Activated naive CD4-positive, alpha-beta T cell treated with anti-CD3 and anti-CD28 coated beads for 36 hours (primary cell): ENCODE measurements at regions of chr12 and their contacts with region 1.

Region 1: GRCh38 chr12:127125607-127126259 is 1141.2 kb upstream of the TMEM132C start:
- DNase-seq: peak; percentile 75
- H3K4me3 Mint-ChIP-seq: no peak overlapping the region
- H3K27ac Mint-ChIP-seq: peak overlapping the region; percentile 36
- H3K4me1 Mint-ChIP-seq: peaks cover 13% of the 10 kb centered on the region
- H3K27me3 Mint-ChIP-seq: peaks cover 22% of the 10 kb centered on the region

Region 2: GRCh38 chr12:126627596-126627995 is 498.1 kb before region 1 on chr12:
- CTCF ChIA-PET with region 1: no interaction called
- intact Hi-C with region 1: no loop called
- DNase-seq: no peak
- H3K4me3 Mint-ChIP-seq: no peak overlapping the region
- H3K27ac Mint-ChIP-seq: no peak overlapping the region
- H3K4me1 Mint-ChIP-seq: no peaks in the 10 kb centered on the region
- H3K27me3 Mint-ChIP-seq: peaks cover 2% of the 10 kb centered on the region

Region 3: DNA sequence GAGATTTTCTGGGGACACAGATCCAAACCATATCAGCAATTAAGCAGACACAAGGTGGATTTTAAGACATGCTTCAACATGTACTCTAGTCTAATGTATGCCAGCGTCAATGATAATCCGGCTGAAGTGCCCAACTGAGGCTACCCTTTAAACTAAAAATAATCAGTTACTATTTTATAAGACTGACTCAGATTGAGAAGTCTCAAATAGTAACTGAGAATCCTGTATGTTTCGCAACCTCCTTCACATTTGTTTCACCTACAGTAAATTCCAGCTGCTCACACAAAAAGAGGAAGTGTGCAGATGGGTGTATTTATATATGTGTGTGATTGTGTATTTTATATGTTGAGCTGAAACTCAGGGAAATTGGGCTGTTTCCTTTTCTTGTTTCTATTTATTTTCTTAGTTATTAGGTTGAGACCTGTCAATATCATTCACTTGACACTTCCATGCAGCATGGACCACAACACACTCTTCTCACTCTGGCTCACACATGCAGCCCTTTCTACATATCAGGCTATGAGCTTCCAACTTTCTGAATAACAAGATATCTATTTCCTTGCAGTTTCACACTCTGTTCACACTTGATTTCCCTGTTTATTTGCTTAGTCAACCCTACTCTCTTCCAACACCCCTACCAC is 83.6 kb before region 1 on chr12:
- CTCF ChIA-PET with region 1: no interaction called
- intact Hi-C with region 1: no loop called
- DNase-seq: no peak
- H3K4me3 Mint-ChIP-seq: no peak overlapping the region
- H3K27ac Mint-ChIP-seq: no peak overlapping the region
- H3K4me1 Mint-ChIP-seq: no peaks in the 10 kb centered on the region
- H3K27me3 Mint-ChIP-seq: peaks cover 6% of the 10 kb centered on the region

Region 4: DNA sequence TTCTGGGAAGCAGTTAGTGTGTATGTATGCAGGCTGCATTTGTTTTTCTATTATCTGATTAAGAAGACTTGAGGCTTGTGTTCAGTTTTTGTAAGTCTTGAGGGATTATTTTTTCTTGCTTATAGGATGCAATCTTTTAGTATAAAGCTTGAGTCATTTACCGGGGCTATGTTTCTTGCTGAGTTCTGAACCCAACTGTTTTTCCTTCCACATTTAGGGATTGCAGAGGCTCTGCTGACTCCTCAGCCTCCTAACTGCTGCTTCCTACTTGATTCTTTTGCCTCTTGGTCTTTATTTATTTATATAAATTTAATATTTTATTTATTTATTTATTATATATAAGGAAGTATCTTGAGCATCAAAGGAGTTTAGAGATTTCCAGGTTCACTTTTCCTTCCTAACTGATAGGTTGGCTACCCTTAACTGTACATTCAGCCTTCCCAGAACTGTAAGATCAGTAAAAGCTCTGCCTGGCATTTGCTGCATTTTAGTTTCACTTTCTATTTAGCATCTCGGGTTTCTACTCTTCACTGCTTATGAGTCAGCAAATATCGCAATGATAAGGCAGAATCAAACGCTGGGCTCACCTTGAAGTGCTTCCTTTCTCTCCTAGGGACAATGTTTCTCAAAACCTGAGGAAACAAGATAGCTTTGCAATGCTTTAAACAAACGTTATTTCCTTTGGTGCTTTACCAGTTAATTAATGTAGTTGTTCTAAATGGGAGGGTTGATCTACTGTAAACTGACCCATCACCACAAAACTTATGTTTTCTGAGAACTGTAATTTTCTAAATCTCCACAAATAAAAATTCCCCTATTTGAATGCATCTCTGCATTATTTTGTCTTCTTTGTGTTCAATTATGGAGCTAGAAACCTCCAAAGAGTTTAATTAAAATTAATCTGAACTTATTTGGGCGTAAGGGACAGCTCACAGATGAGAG is 42.5 kb before region 1 on chr12:
- CTCF ChIA-PET with region 1: no interaction called
- intact Hi-C with region 1: loop called (anchors 1 kb)
- DNase-seq: peak; percentile 44
- H3K4me3 Mint-ChIP-seq: no peak overlapping the region
- H3K27ac Mint-ChIP-seq: peak overlapping the region; percentile 31
- H3K4me1 Mint-ChIP-seq: peaks cover 11% of the 10 kb centered on the region
- H3K27me3 Mint-ChIP-seq: peaks cover 5% of the 10 kb centered on the region

Region 5: GRCh38 chr12:127165567-127166392 is 40.0 kb after region 1 on chr12:
- CTCF ChIA-PET with region 1: interaction called, 3 read pairs
- intact Hi-C with region 1: loop called (anchors 1 kb)
- DNase-seq: peak; percentile 86
- H3K4me3 Mint-ChIP-seq: peak overlapping the region; percentile 74
- H3K27ac Mint-ChIP-seq: no peak overlapping the region
- H3K4me1 Mint-ChIP-seq: peaks cover 22% of the 10 kb centered on the region
- H3K27me3 Mint-ChIP-seq: peaks cover 7% of the 10 kb centered on the region

Region 6: GRCh38 chr12:127280393-127281275 is 154.9 kb after region 1 on chr12:
- CTCF ChIA-PET with region 1: no interaction called
- intact Hi-C with region 1: loop called (anchors 5 kb)
- DNase-seq: peak; percentile 77
- H3K4me3 Mint-ChIP-seq: no peak overlapping the region
- H3K27ac Mint-ChIP-seq: no peak overlapping the region
- H3K4me1 Mint-ChIP-seq: no peaks in the 10 kb centered on the region
- H3K27me3 Mint-ChIP-seq: peaks cover 25% of the 10 kb centered on the region

Region 7: DNA sequence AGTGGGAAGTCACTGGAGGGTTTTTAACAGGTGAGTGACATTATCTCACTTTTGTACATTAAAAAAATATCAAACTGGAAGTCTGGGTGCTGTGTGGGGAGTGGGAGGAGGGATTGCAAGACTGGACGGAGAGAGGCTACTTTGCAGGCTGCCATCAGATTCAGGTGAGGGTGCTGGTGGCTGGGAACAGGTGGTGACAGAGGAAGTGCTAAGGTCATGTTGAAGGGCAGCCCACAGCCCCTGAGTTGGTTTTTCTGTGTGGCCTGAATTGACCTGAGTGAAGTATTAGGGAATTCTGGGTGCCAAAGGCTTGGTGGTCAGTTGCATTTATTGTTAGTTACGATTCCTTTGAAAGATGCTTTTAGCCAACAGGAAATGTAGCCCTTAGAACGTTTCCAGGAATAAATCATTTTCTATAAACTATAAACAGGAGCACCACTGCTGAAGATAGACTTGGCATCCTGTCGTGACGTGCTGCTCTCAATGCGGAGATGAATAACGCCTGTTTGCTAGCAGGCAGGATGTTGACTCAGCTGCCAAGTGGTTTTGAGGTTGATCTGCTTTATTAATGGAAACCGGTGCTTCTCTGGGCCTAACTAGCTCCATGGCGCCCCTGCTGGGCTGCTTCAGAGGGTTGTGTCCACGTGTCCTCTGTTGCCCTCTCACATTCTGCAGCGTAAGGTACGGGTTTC is 433.8 kb after region 1 on chr12:
- CTCF ChIA-PET with region 1: no interaction called
- intact Hi-C with region 1: loop called (anchors 5 kb)
- DNase-seq: peak; percentile 87
- H3K4me3 Mint-ChIP-seq: no peak overlapping the region
- H3K27ac Mint-ChIP-seq: peak overlapping the region; percentile 89
- H3K4me1 Mint-ChIP-seq: peaks cover 11% of the 10 kb centered on the region
- H3K27me3 Mint-ChIP-seq: peaks cover 12% of the 10 kb centered on the region